ENCODE measurements at regions of chr10 and their contacts with region 1.

Region 1: DNA sequence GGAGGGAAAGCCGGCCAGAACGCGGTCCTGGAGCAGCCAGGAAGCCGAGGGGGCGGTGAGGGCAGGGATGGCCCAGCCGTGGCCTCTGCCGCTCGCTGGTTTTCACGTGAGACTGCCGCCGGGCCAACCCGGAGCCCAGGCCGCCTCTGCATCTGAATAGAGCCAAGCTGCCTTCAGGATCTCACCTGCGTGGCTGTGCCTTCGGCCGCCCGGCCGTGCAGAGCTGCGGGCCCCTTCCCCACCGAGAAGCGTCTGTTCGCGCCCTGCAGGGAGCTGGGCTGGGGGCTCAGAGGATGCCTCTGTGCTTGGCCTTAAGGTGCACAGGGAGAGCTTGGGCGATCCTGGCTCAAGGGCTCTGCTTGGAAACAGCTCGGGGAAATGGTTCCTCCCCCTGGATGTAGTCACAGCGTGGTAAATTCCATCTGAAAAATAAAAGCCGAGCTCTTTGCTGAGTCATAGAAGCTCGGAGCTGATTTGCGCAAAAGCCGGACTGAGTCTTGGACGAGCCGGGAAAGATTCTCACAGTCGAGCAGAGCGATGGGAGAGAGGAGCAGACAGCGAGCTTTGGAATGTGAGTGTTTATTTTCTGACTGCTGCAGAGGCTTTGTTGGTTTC is at the start of gene JAKMIP3:
- DNase-seq: peak; percentile 29 to 64 (median 46)
- ATAC-seq: peak; percentile 41 to 78 (median 66)
- H3K4me3 ChIP-seq: peak within 1 kb of the TSS; percentile 25 to 65 (median 53)
- H3K27ac ChIP-seq: peak within 1 kb of the TSS; percentile 40 to 78 (median 68)
- H3K4me1 ChIP-seq: peaks cover 0 to 26% (median 6%) of the 10 kb centered on the region in 12 donors
- H3K27me3 ChIP-seq: no peaks in the 10 kb centered on the region
- CTCF ChIP-seq: no peak
- POLR2A ChIP-seq: no peak
- total RNA-seq, gene JAKMIP3: 0.31 to 3.1 (median 1.4) TPM

Region 2: GRCh38 chr10:132036153-132036886 is 29.3 kb before region 1 on chr10:
- intact Hi-C with region 1: loop called in 1 of 10 experiments (anchors 1 kb)
- DNase-seq: peak in 4 of 5 donors; percentile 17 to 72 (median 44)
- ATAC-seq: peak in 3 of 4 donors; percentile 66 to 76 (median 75)
- H3K4me3 ChIP-seq: peak overlapping the region; percentile 7 to 74 (median 48)
- H3K27ac ChIP-seq: peak overlapping the region in 6 of 12 donors; percentile 8 to 76 (median 48)
- H3K4me1 ChIP-seq: peaks cover 0 to 16% (median 0%) of the 10 kb centered on the region in 12 donors
- H3K27me3 ChIP-seq: peaks cover 0 to 58% (median 6%) of the 10 kb centered on the region in 9 donors
- CTCF ChIP-seq: no peak
- POLR2A ChIP-seq: no peak

Region 3: DNA sequence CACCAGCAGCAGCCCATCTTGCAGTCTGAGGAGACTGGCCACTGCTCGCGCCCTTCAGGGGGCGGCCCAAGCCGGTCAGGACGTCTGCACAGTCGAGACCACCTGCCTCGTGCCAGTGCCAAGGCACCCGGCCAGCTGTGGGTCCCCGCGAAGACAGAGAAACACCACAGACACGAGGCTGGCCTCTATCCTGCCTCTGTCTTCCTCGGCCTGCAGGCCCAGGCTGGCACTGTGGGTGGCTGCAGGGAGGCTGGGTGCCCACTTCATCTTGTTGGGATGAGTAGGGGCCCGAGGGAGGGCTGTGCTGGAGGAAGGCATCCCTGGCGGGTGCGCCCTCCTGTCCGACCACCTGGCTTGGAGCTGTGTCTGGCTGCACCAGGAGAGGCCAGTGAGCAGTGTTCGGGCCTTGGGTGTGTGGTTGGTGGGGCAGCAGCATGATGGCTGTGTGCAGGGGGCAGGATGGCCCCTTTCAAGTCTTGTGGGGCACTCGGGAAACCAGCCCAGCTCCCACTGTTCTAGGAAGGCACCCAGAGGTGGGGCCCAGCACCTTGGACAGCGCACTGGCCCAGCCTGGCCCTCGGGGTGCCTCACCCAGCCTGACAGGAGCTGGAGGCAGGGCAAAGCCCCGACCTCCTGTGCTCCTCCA is 128.4 kb after region 1 on chr10:
- intact Hi-C with region 1: no loop called
- DNase-seq: peak in 4 of 5 donors; percentile 22 to 66 (median 57)
- ATAC-seq: peak; percentile 41 to 69 (median 54)
- H3K4me3 ChIP-seq: no peak overlapping the region
- H3K27ac ChIP-seq: peak overlapping the region in 4 of 12 donors; percentile 60 to 82 (median 74)
- H3K4me1 ChIP-seq: peaks cover 0 to 25% (median 16%) of the 10 kb centered on the region in 12 donors
- H3K27me3 ChIP-seq: peaks cover 0 to 10% (median 0%) of the 10 kb centered on the region in 9 donors
- CTCF ChIP-seq: no peak
- POLR2A ChIP-seq: no peak